Activated CD8-positive, alpha-beta T cell treated with anti-CD3 and anti-CD28 coated beads for 36 hours (primary cell): ENCODE measurements at regions of chr13 and their contacts with region 1.

Region 1: GRCh38 chr13:98542568-98543377 is 34.1 kb downstream of the STK24 start:
- DNase-seq: peak; percentile 62
- ATAC-seq: peak; percentile 63
- H3K4me3 Mint-ChIP-seq: peak overlapping the region; percentile 69
- H3K27ac Mint-ChIP-seq: peak overlapping the region; percentile 88
- H3K4me1 Mint-ChIP-seq: peaks cover 90% of the 10 kb centered on the region
- H3K27me3 Mint-ChIP-seq: no peaks in the 10 kb centered on the region
- CTCF ChIP-seq: no peak

Region 2: DNA sequence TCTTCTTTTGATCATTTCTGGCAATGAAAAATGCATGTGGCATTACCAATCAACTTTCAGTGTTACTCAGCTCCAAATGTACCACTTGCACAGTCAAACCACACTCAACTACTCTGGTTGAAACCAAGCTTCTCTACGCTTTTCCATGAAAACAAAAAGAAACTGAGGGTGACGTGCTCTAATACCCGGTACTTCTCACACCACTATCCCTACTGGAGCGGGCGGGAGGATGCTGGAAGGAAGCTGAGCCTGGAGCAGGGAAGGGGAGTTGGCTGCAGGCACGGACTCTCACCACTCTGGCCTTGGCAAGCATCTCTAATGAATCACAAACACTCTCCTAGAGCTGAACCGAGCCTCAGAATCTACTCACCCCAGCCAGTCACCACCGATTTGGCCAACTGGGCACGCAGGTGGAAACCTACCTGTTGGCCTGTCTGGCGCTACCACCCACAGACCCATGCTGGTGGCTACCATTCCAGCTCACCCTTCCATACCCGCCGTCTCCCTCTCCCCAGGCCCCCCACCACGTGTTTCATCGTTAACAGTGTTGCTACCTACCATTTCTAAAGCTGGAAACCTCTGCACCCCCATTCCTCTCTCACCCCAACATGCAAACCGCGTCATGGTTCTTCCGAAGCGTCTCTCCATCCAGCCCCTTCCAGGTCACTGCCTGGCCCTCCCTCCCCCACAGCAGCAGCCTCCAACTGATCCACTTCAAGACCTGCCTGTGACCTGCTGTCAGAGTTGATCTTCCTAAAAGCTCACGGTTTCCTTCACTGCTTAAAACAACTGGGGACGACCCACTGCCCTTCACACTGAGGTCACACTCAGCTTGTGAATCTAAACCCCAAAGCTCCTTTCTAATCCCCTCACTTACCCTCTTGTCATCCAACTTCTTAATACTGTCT is 13.9 kb before region 1 on chr13:
- CTCF ChIA-PET with region 1: interaction called, 22 read pairs
- POLR2A ChIA-PET with region 1: interaction called, 41 read pairs
- intact Hi-C with region 1: no loop called
- DNase-seq: peak; percentile 30
- ATAC-seq: peak; percentile 80
- H3K4me3 Mint-ChIP-seq: peak overlapping the region; percentile 31
- H3K27ac Mint-ChIP-seq: peak overlapping the region; percentile 84
- H3K4me1 Mint-ChIP-seq: peaks cover 86% of the 10 kb centered on the region
- H3K27me3 Mint-ChIP-seq: no peaks in the 10 kb centered on the region
- CTCF ChIP-seq: no peak

Region 3: DNA sequence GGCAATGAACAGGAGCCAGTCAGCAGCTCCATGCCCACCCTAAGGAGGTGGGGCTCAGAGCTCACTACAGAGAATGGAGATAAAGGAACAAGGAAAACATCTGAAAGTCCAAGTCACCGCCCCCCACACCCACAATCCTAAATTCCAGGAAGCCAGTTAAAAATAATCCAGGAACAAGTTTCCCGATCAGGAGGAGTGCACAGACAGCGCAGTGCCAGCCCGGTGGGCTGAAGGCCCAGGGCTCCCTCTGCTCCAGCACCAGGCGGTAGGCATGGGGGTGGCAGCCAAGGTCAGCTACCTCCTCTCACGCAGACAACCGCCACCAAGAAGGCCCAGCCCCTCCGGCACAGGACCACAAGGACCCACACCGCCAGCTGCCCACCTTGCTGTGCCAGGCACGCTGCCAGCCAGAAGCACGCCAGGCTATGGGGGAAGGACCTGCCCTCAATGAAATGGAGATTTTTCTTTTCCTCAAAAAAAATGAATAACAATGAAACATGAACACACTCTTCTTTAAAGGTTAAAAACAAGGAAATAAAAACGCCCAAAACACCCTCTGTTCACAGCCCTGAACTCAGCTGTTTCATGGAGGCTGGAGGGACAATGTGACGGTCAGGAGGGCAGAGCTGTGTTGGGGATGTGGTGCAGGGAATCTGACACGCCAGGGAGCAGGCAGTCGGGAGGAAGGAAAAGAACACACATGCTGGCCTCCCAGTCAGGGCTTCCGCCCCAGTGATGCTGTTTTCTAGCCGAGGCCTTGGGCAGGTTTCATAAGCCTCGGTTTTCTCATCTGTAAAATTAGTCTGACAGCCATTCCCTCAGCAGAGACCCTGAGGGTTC is 23.2 kb after region 1 on chr13:
- CTCF ChIA-PET with region 1: interaction called, 3 read pairs
- POLR2A ChIA-PET with region 1: interaction called, 10 read pairs
- intact Hi-C with region 1: no loop called
- DNase-seq: no peak
- ATAC-seq: no peak
- H3K4me3 Mint-ChIP-seq: peak overlapping the region; percentile 28
- H3K27ac Mint-ChIP-seq: peak overlapping the region; percentile 83
- H3K4me1 Mint-ChIP-seq: peaks cover 89% of the 10 kb centered on the region
- H3K27me3 Mint-ChIP-seq: no peaks in the 10 kb centered on the region
- CTCF ChIP-seq: no peak

Region 4: GRCh38 chr13:99626461-99627082 is 1083.8 kb after region 1 on chr13:
- CTCF ChIA-PET with region 1: no interaction called
- POLR2A ChIA-PET with region 1: no interaction called
- intact Hi-C with region 1: no loop called
- DNase-seq: no peak
- ATAC-seq: no peak
- H3K4me3 Mint-ChIP-seq: no peak overlapping the region
- H3K27ac Mint-ChIP-seq: no peak overlapping the region
- H3K4me1 Mint-ChIP-seq: peaks cover 24% of the 10 kb centered on the region
- H3K27me3 Mint-ChIP-seq: no peaks in the 10 kb centered on the region
- CTCF ChIP-seq: no peak